Naive thymus-derived CD4-positive, alpha-beta T cell (primary cell): ENCODE measurements at regions of chr2 and their contacts with region 1.

Region 1: DNA sequence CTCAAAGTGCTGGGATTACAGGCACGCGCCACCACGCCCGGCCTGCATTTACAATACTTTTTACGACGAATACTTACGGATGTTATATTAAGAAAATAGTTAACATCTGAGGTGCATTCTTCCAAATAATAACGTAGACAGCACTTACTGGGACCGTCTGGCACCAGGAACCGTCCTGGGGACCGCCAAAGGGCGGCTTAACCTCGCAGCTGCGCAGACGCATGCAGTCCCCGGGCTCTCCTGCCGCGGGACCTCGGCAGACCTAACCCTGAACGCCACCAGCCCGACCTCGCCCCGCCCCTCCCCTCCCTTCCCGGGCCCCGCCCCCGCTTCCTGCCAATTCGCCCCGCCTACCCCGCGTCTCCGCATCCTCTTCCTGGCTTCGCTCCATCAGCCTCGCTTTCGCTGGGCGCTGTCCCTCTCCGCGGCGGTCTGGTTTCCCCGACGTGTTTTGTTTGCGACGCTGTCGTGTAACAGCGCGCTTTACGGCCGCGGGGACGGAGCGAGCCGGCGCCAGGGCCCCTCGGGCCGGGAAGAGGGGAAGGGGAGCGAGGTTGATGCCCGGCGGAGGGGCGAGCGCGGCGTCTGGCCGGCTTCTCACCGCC is at the start of gene CNOT11:
- DNase-seq: peak; percentile 97 to 99 (median 98)
- ATAC-seq: peak; percentile 89
- H3K4me3 ChIP-seq: peak within 1 kb of the TSS; percentile 91
- H3K4me3 Mint-ChIP-seq: peak within 1 kb of the TSS; percentile 91 to 98 (median 96)
- H3K27ac ChIP-seq: peak within 1 kb of the TSS; percentile 99
- H3K27ac Mint-ChIP-seq: peak within 1 kb of the TSS; percentile 92 to 98 (median 96)
- H3K4me1 ChIP-seq: peaks cover 28 to 39% of the 10 kb centered on the region in 2 donors
- H3K4me1 Mint-ChIP-seq: peaks cover 27 to 58% (median 51%) of the 10 kb centered on the region in 7 donors
- H3K27me3 ChIP-seq: no peaks in the 10 kb centered on the region
- H3K27me3 Mint-ChIP-seq: no peaks in the 10 kb centered on the region
- total RNA-seq, gene CNOT11: 49.0 to 65.7 (median 54.3) TPM

Region 2: DNA sequence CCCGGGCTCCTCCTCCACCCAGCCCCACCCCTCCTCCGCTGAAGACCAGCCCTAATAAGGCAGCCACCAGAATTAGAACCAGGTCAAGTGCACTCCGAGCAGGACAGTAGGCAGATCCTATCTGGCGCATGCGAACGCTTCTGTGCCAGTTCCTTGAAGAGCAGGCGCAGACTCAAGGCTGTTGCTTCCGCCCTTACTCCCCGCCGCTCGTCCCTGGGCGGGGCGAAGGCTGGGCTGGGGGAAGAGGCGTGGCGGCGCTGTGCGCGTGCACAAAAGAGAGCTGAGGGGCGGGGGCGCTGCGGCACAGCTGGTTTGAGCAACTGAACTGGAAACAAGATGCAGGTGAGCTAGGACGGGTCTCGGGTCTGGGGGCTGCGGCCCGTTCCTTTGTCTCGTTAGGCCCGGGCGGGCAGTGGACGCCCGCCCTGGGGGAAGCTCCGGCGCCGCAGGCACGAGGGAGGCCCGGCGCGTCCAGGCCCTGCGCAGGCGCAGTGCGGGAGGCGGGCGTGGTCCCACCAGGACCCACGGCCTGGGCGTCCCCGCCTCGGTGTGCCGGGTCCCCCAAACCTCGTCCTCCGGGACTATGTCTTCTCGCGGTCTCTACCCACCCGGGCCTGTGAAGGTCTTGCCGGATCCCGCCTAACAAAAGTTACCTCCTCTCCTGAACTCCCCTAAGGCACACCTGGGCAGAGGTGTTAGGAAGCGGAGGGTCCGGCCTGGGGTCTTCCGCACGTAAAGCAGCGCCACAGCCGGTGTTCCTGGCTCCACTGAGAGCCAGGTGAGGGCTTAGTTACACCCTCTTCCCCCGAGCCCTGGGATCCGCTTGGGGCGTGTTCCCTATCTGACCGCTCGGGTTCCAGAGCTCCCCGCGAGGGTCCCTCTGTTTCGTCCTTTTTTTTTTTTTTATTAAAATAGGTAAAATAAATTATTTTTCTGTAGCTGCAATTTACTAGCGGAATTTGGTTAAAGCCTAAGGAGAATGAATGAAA is 689.5 kb before region 1 on chr2 and contains the start of gene PDCL3:
- CTCF ChIA-PET with region 1: no interaction called
- POLR2A ChIA-PET with region 1: no interaction called
- intact Hi-C with region 1: loop called (anchors 2 kb)
- DNase-seq: peak; percentile 91 to 97 (median 96)
- ATAC-seq: peak; percentile 94
- H3K4me3 ChIP-seq: peak within 1 kb of the TSS; percentile 99
- H3K4me3 Mint-ChIP-seq: peak within 1 kb of the TSS; percentile 85 to 100 (median 97)
- H3K27ac ChIP-seq: peak within 1 kb of the TSS; percentile 78
- H3K27ac Mint-ChIP-seq: peak within 1 kb of the TSS; percentile 97 to 99 (median 99)
- H3K4me1 ChIP-seq: peaks cover 15 to 16% of the 10 kb centered on the region in 2 donors
- H3K4me1 Mint-ChIP-seq: peaks cover 14 to 64% (median 52%) of the 10 kb centered on the region in 7 donors
- H3K27me3 ChIP-seq: no peaks in the 10 kb centered on the region
- H3K27me3 Mint-ChIP-seq: peaks cover 0 to 2% (median 0%) of the 10 kb centered on the region in 5 donors
- total RNA-seq, gene PDCL3: 16.6 to 31.9 (median 19.9) TPM

Region 3: GRCh38 chr2:101205521-101205998 is 47.0 kb before region 1 on chr2:
- CTCF ChIA-PET with region 1: interaction called, 5 read pairs
- POLR2A ChIA-PET with region 1: no interaction called
- intact Hi-C with region 1: loop called in 1 of 2 experiments (anchors 2 kb)
- DNase-seq: peak in 7 of 9 donors; percentile 44 to 72 (median 55)
- ATAC-seq: peak; percentile 94
- H3K4me3 ChIP-seq: no peak overlapping the region
- H3K4me3 Mint-ChIP-seq: peak overlapping the region; percentile 27 to 80 (median 66)
- H3K27ac ChIP-seq: peak overlapping the region; percentile 52
- H3K27ac Mint-ChIP-seq: peak overlapping the region; percentile 27 to 93 (median 87)
- H3K4me1 ChIP-seq: no peaks in the 10 kb centered on the region
- H3K4me1 Mint-ChIP-seq: peaks cover 4 to 14% (median 12%) of the 10 kb centered on the region in 7 donors
- H3K27me3 ChIP-seq: no peaks in the 10 kb centered on the region
- H3K27me3 Mint-ChIP-seq: peaks cover 0 to 5% (median 0%) of the 10 kb centered on the region in 5 donors

Region 4: GRCh38 chr2:101272045-101272784 is 19.7 kb after region 1 on chr2:
- CTCF ChIA-PET with region 1: interaction called, 3 read pairs
- POLR2A ChIA-PET with region 1: interaction called, 8 read pairs
- intact Hi-C with region 1: loop called (anchors 1 to 2 kb)
- DNase-seq: no peak
- ATAC-seq: peak; percentile 29
- H3K4me3 ChIP-seq: no peak overlapping the region
- H3K4me3 Mint-ChIP-seq: peak overlapping the region in 1 of 10 donors; percentile 69
- H3K27ac ChIP-seq: peak overlapping the region; percentile 5
- H3K27ac Mint-ChIP-seq: peak overlapping the region; percentile 12 to 84 (median 69)
- H3K4me1 ChIP-seq: peaks cover 0 to 3% of the 10 kb centered on the region in 2 donors
- H3K4me1 Mint-ChIP-seq: peaks cover 17 to 49% (median 32%) of the 10 kb centered on the region in 7 donors
- H3K27me3 ChIP-seq: no peaks in the 10 kb centered on the region
- H3K27me3 Mint-ChIP-seq: no peaks in the 10 kb centered on the region

Region 5: GRCh38 chr2:101341901-101342624 is 89.6 kb after region 1 on chr2:
- CTCF ChIA-PET with region 1: interaction called, 4 read pairs
- POLR2A ChIA-PET with region 1: no interaction called
- intact Hi-C with region 1: loop called in 1 of 2 experiments (anchors 1 kb)
- DNase-seq: peak; percentile 32 to 73 (median 51)
- ATAC-seq: peak; percentile 76
- H3K4me3 ChIP-seq: no peak overlapping the region
- H3K4me3 Mint-ChIP-seq: peak overlapping the region in 4 of 10 donors; percentile 10 to 63 (median 18)
- H3K27ac ChIP-seq: no peak overlapping the region
- H3K27ac Mint-ChIP-seq: peak overlapping the region in 5 of 9 donors; percentile 9 to 68 (median 31)
- H3K4me1 ChIP-seq: peaks cover 6 to 21% of the 10 kb centered on the region in 2 donors
- H3K4me1 Mint-ChIP-seq: peaks cover 24 to 43% (median 32%) of the 10 kb centered on the region in 7 donors
- H3K27me3 ChIP-seq: no peaks in the 10 kb centered on the region
- H3K27me3 Mint-ChIP-seq: peaks cover 0 to 20% (median 0%) of the 10 kb centered on the region in 5 donors

Region 6: DNA sequence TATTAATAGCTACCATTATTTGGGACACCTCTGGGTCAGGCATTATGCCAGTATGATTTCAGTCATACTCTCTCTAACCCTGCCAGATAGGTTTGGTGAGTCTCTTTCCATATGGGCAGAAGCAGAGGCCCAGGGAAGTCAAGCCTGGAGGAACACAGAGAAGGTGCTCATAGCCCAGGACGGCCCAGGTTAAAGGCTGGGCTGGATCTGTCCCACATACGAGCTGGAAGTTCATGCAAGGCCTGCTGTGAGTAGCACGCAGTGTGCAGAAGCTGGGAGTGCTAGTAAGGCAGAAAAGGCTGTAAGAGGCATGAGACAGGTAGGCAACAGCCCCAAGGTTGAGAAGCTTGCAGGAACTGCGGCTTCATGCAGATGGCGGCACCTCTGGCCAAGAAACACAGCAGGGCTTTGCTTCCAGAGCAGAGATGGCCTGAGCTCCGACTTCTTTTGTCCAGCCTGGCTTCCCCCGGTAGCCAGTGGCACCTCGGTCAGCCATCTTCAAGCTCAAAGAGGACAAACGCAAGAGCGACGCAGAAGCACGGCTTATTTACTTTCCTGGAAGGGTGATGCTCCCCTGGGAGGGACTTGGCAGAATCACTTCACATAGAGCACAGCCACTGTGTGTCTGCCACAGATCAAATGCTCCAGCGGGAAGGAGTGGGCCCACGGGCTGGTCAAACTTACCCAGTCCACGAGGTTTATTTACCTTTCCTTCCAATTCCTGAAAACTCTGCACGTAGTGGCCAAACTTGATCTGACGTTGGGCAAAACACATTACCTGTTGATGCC is 386.5 kb after region 1 on chr2:
- CTCF ChIA-PET with region 1: no interaction called
- POLR2A ChIA-PET with region 1: no interaction called
- intact Hi-C with region 1: no loop called
- DNase-seq: no peak
- ATAC-seq: no peak
- H3K4me3 ChIP-seq: no peak overlapping the region
- H3K4me3 Mint-ChIP-seq: no peak overlapping the region
- H3K27ac ChIP-seq: no peak overlapping the region
- H3K27ac Mint-ChIP-seq: peak overlapping the region in 1 of 9 donors; percentile 72
- H3K4me1 ChIP-seq: no peaks in the 10 kb centered on the region
- H3K4me1 Mint-ChIP-seq: peaks cover 0 to 6% (median 0%) of the 10 kb centered on the region in 7 donors
- H3K27me3 ChIP-seq: no peaks in the 10 kb centered on the region
- H3K27me3 Mint-ChIP-seq: no peaks in the 10 kb centered on the region

Region 7: GRCh38 chr2:101710471-101711318 is 458.2 kb after region 1 on chr2:
- CTCF ChIA-PET with region 1: no interaction called
- POLR2A ChIA-PET with region 1: no interaction called
- intact Hi-C with region 1: loop called (anchors 5 to 10 kb)
- DNase-seq: no peak
- ATAC-seq: peak; percentile 71
- H3K4me3 ChIP-seq: no peak overlapping the region
- H3K4me3 Mint-ChIP-seq: peak overlapping the region in 9 of 10 donors; percentile 14 to 73 (median 53)
- H3K27ac ChIP-seq: peak overlapping the region; percentile 69
- H3K27ac Mint-ChIP-seq: peak overlapping the region in 7 of 9 donors; percentile 40 to 95 (median 78)
- H3K4me1 ChIP-seq: peaks cover 66 to 72% of the 10 kb centered on the region in 2 donors
- H3K4me1 Mint-ChIP-seq: peaks cover 36 to 86% (median 59%) of the 10 kb centered on the region in 7 donors
- H3K27me3 ChIP-seq: no peaks in the 10 kb centered on the region
- H3K27me3 Mint-ChIP-seq: no peaks in the 10 kb centered on the region